K562 (cell line): ENCODE measurements at regions of chr4 and their contacts with region 1.

Region 1: GRCh38 chr4:139530833-139531427 is 25.1 kb downstream of the SETD7 start:
- DNase-seq: peak; percentile 61 to 75 (median 68)
- ATAC-seq: peak; percentile 95
- H3K4me3 ChIP-seq: no peak overlapping the region
- H3K27ac ChIP-seq: no peak overlapping the region
- H3K4me1 ChIP-seq: no peaks in the 10 kb centered on the region
- H3K27me3 ChIP-seq: peaks cover 2 to 9% of the 10 kb centered on the region in 2 experiments; a peak in 2 of 5 replicates
- CTCF ChIP-seq: peak; percentile 81 to 92 (median 81)
- EP300 ChIP-seq: no peak
- POLR2A ChIP-seq: no peak
- RAD21 ChIP-seq: peak; percentile 59 to 69

Region 2: GRCh38 chr4:139007640-139008039 is 523.3 kb before region 1 on chr4:
- CTCF ChIA-PET with region 1: no interaction called
- POLR2A ChIA-PET with region 1: no interaction called
- in situ Hi-C with region 1: no loop called
- intact Hi-C with region 1: no loop called
- DNase-seq: no peak
- ATAC-seq: no peak
- H3K4me3 ChIP-seq: no peak overlapping the region
- H3K27ac ChIP-seq: no peak overlapping the region
- H3K4me1 ChIP-seq: peaks cover 4 to 9% of the 10 kb centered on the region in 2 experiments; a peak in 4 of 5 replicates
- H3K27me3 ChIP-seq: no peaks in the 10 kb centered on the region
- CTCF ChIP-seq: no peak
- EP300 ChIP-seq: no peak
- POLR2A ChIP-seq: no peak
- RAD21 ChIP-seq: no peak

Region 3: DNA sequence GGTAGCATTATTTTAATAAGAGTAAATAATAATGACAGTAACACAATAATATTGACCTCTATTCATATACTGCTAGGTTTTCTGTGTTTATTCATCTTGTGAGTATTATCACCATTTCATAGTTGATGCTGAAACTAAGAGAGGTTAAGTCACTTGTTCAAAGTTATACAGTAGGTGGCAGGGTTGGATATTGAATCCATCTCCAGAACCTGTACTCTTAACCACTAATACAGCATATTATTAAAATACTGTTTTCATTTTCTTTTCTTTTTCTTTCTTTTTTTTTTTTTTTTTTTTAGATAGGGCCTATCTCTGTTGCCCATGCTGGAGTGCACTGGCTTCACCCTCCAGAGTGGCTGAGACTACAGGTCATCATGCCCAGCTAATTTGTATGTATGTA is 346.8 kb before region 1 on chr4:
- CTCF ChIA-PET with region 1: no interaction called
- POLR2A ChIA-PET with region 1: no interaction called
- in situ Hi-C with region 1: no loop called
- intact Hi-C with region 1: loop called (anchors 1 kb)
- DNase-seq: no peak
- ATAC-seq: peak; percentile 46
- H3K4me3 ChIP-seq: no peak overlapping the region
- H3K27ac ChIP-seq: no peak overlapping the region
- H3K4me1 ChIP-seq: peaks cover 5 to 14% of the 10 kb centered on the region in 2 experiments; a peak in 3 of 5 replicates
- H3K27me3 ChIP-seq: no peaks in the 10 kb centered on the region
- CTCF ChIP-seq: peak in 2 of 3 experiments; percentile 36 to 66; a peak in 3 of 6 replicates
- EP300 ChIP-seq: no peak
- POLR2A ChIP-seq: no peak
- RAD21 ChIP-seq: peak; percentile 59 to 78

Region 4: DNA sequence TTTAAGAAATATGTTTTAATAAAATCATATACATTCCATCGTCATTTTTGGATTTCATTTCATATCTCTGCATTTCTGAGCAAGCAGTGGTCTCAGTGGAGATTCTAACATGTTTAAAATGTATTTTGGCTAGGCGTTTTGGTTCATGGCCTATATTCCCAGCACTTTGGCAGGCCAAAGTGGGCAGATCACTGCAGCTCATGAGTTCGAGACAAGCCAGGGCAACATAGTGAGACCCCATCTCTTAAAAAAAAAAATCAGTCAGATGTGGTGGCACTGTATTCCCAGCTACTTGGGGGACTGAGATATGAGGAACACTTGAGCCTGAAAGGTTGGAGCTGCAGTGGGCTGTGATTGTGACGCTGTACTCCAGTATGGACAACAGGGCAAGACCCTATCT is 144.5 kb before region 1 on chr4:
- CTCF ChIA-PET with region 1: no interaction called
- POLR2A ChIA-PET with region 1: no interaction called
- in situ Hi-C with region 1: no loop called
- intact Hi-C with region 1: no loop called
- DNase-seq: no peak
- ATAC-seq: no peak
- H3K4me3 ChIP-seq: no peak overlapping the region
- H3K27ac ChIP-seq: no peak overlapping the region
- H3K4me1 ChIP-seq: no peaks in the 10 kb centered on the region
- H3K27me3 ChIP-seq: no peaks in the 10 kb centered on the region
- CTCF ChIP-seq: no peak
- EP300 ChIP-seq: no peak
- POLR2A ChIP-seq: no peak
- RAD21 ChIP-seq: no peak

Region 5: DNA sequence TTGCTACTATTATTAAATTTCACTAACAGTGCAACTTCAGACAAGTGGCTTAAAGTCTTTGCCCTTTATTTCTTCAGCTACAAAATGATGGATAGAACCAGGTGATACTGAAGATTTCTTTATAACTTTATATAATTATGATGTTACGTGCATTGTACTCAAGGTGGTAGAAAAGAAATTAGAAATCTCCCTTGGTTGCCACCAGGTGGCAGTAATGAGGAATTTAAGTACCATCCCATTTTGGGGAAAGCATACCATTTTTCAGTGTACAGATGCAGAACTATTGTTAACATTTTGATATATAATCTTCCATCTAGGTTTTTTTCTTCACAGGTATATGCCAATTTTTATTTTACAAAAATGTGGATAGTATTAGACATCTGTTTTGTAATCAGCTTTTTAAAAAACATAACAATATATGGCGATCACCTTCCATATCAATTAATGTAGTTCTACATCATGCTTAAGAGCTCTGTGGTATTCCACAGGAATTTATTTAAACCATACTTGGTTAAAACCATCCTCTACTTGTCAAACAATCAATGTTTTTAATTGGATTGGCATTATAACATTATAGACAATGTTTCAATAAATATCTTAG is 114.8 kb before region 1 on chr4:
- CTCF ChIA-PET with region 1: interaction called, 6 read pairs
- POLR2A ChIA-PET with region 1: no interaction called
- in situ Hi-C with region 1: no loop called
- intact Hi-C with region 1: loop called (anchors 1 kb)
- DNase-seq: peak; percentile 31 to 72 (median 36)
- ATAC-seq: peak; percentile 79
- H3K4me3 ChIP-seq: no peak overlapping the region
- H3K27ac ChIP-seq: no peak overlapping the region
- H3K4me1 ChIP-seq: no peaks in the 10 kb centered on the region
- H3K27me3 ChIP-seq: no peaks in the 10 kb centered on the region
- CTCF ChIP-seq: peak; percentile 49 to 70 (median 57); a peak in 5 of 6 replicates
- EP300 ChIP-seq: no peak
- POLR2A ChIP-seq: no peak
- RAD21 ChIP-seq: peak in 1 of 2 experiments; percentile 67; a peak in 3 of 4 replicates